Activated T-helper 2 cell treated with anti-CD3 and anti-CD28 coated beads, Interferon-gamma antibody, Interleukin-2, Interleukin-4, amounts not matched to agents 10 μg/mL and 5 μg/mL and 100 μg/mL, durations not matched to agents 14 hours and 24 hours and 36 hours (primary cell): ENCODE measurements at regions of chr11 and their contacts with region 1.

Region 1: GRCh38 chr11:2466869-2467698 is 22.3 kb downstream of the KCNQ1 start:
- DNase-seq: peak; percentile 70
- H3K4me3 Mint-ChIP-seq: no peak overlapping the region
- H3K27ac Mint-ChIP-seq: no peak overlapping the region
- H3K4me1 Mint-ChIP-seq: peaks cover 19% of the 10 kb centered on the region
- H3K27me3 Mint-ChIP-seq: peaks cover 14% of the 10 kb centered on the region

Region 2: DNA sequence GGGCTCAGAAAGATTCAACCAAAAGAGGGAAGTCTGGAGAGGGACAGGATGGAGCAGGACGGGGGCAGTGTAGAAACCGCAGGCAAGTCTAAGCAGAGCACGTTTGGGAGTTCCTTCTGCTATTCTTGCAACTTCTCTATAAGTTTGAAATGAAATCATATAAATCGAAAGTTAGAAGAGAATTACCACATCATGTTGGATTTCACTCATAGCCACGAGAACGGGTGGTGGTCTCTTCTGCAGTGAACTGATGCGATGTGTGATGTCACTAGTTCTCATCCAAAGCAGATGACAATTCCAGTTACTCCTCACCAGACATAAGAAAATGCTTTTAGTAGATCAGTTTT is 13.8 kb after region 1 on chr11:
- intact Hi-C with region 1: loop called (anchors 2 kb)
- DNase-seq: no peak
- H3K4me3 Mint-ChIP-seq: peak overlapping the region; percentile 31
- H3K27ac Mint-ChIP-seq: peak overlapping the region; percentile 9
- H3K4me1 Mint-ChIP-seq: peaks cover 12% of the 10 kb centered on the region
- H3K27me3 Mint-ChIP-seq: peaks cover 5% of the 10 kb centered on the region